ENCODE measurements at regions of chr9 and their contacts with region 1.

Region 1: DNA sequence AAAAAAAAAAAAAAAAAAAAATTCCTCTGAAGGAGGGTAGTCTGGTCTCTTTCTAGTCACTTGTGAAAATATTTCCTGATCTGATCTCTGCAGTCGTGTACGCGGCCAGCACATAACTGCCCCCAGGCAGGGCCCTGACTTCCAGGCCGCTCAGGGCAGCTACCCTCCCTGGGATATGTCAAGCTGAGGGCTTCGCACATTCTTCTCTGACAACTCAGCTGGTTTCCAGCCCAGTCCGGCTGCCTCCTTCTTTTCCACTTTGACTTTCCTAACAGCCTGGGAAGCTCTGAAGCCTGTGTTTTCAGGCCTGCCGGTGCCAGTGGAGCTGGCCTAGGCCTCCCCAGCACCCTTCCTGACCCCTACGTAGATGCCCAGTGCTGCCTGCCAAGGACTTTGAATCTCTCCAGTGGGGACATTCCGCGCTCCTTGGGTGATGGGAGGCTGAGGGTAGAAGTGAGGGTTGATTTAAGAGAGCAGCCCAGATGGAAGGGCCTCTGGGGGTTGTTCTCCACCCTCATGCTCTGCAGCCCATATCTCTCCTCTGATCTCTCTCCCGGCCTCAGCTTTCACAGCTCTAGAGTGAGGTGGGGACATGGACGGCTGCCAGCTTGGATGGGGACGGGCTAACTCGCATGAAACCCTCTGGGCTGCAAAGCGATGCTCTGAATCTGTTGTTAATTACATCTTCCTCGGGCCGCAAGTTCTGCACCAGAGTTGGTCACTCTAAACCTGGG is 20.7 kb downstream of the COL5A1 start:
- DNase-seq: no peak
- ATAC-seq: no peak
- H3K4me3 ChIP-seq: no peak overlapping the region
- H3K4me3 Mint-ChIP-seq: no peak overlapping the region
- H3K27ac ChIP-seq: no peak overlapping the region
- H3K27ac Mint-ChIP-seq: no peak overlapping the region
- H3K4me1 ChIP-seq: no peaks in the 10 kb centered on the region
- H3K4me1 Mint-ChIP-seq: no peaks in the 10 kb centered on the region
- H3K27me3 ChIP-seq: peaks cover 0 to 23% of the 10 kb centered on the region in 2 experiments
- H3K27me3 Mint-ChIP-seq: peaks cover 13% of the 10 kb centered on the region in 2 donors

Region 2: GRCh38 chr9:134123764-134124128 is 538.6 kb before region 1 on chr9:
- CTCF ChIA-PET with region 1: no interaction called
- POLR2A ChIA-PET with region 1: no interaction called
- DNase-seq: no peak
- ATAC-seq: no peak
- H3K4me3 ChIP-seq: no peak overlapping the region
- H3K4me3 Mint-ChIP-seq: no peak overlapping the region
- H3K27ac ChIP-seq: no peak overlapping the region
- H3K27ac Mint-ChIP-seq: no peak overlapping the region
- H3K4me1 ChIP-seq: no peaks in the 10 kb centered on the region
- H3K4me1 Mint-ChIP-seq: no peaks in the 10 kb centered on the region
- H3K27me3 ChIP-seq: peaks cover 0 to 10% of the 10 kb centered on the region in 2 experiments
- H3K27me3 Mint-ChIP-seq: peaks cover 0 to 3% of the 10 kb centered on the region in 2 donors

Region 3: DNA sequence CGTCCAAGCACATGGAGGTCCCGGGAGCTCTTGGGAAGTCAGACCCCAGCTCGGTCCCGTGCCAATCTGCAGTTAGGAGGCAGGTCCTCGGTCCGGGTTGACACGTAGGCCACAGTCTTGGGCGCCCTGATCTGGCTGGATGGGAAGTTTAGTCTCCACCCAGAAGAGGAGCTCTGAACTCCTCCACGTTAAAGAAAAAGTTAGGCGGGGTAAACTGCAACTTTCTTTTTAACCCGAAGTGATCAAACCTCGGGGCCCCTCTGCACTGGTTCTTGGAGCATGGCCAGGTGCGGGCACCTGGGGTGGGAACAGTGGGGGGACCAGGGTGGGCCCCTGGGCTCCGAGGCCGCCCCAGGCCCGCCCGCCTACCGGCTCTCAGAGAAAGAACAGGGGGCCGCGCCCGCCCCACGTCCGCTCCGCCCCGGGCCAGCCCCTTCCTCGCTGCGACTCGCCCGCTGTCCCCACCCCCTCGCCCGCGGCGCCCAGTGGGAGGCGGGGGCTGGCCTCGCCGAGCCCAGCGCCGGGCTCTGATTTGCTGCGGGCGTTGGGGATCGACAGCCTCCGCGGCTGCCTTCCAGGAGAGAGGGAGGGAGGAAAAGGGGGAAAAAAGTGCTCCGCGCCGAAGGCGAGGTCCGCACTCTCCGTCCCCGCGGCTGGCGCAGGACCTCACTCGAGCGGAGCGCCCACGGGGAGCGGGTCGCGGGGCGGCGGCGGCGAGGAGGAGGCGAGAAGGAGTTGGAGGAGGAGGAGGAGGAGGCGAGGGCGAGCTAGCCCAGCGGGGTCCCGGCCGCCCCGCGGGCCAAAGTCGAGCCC is 20.9 kb before region 1 on chr9 and contains the start of gene COL5A1:
- CTCF ChIA-PET with region 1: no interaction called
- POLR2A ChIA-PET with region 1: interaction called in 1 of 2 experiments, 11 read pairs
- DNase-seq: peak in 32 of 35 experiments; percentile 3 to 58 (median 30)
- ATAC-seq: peak; percentile 85 to 98 (median 88)
- H3K4me3 ChIP-seq: peak within 1 kb of the TSS in 1 of 2 donors; percentile 29
- H3K4me3 Mint-ChIP-seq: peak within 1 kb of the TSS; percentile 48 to 62 (median 53)
- H3K27ac ChIP-seq: no peak within 1 kb of the TSS
- H3K27ac Mint-ChIP-seq: peak within 1 kb of the TSS in 1 of 2 donors; percentile 31
- H3K4me1 ChIP-seq: peaks cover 0 to 4% of the 10 kb centered on the region in 2 experiments
- H3K4me1 Mint-ChIP-seq: peaks cover 0 to 3% (median 2%) of the 10 kb centered on the region in 3 donors
- H3K27me3 ChIP-seq: peaks cover 0 to 44% of the 10 kb centered on the region in 2 experiments
- H3K27me3 Mint-ChIP-seq: peaks cover 17 to 32% of the 10 kb centered on the region in 2 donors
- total RNA-seq, gene COL5A1: 0.18 to 2.3 (median 1.7) TPM